HepG2 (cell line): ENCODE measurements at regions of chr6 and their contacts with region 1.

Region 1: DNA sequence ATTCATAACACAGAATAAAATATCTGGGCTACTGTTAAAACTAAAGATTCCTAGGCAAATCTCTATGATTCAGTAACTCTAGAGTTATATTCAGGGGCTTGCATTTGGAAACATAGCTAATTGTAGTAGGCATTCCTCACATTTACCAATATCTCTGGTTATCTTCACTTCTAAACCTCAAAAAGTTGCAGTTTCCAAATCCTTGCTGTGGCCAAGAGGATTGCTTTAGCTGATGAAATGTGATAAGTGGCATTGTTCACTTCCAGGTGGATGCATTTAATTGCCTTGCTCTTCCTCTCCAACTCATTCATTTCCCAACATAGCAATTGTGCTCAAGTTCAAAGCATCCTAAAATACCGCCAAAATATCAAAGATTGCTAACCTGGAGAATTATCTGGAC is 246.6 kb downstream of the GRIK2 start:
- DNase-seq: no peak
- ATAC-seq: no peak
- H3K4me3 ChIP-seq: no peak overlapping the region
- H3K27ac ChIP-seq: no peak overlapping the region
- H3K4me1 ChIP-seq: no peaks in the 10 kb centered on the region
- H3K27me3 ChIP-seq: no peaks in the 10 kb centered on the region
- CTCF ChIP-seq: no peak
- EP300 ChIP-seq: no peak
- POLR2A ChIP-seq: no peak
- RAD21 ChIP-seq: no peak

Region 2: GRCh38 chr6:101666256-101666655 is 26.1 kb after region 1 on chr6:
- CTCF ChIA-PET with region 1: no interaction called
- POLR2A ChIA-PET with region 1: no interaction called
- in situ Hi-C with region 1: no loop called
- intact Hi-C with region 1: loop called (anchors 1 kb)
- DNase-seq: peak; percentile 0
- ATAC-seq: no peak
- H3K4me3 ChIP-seq: no peak overlapping the region
- H3K27ac ChIP-seq: no peak overlapping the region
- H3K4me1 ChIP-seq: no peaks in the 10 kb centered on the region
- H3K27me3 ChIP-seq: no peaks in the 10 kb centered on the region
- CTCF ChIP-seq: no peak
- EP300 ChIP-seq: no peak
- POLR2A ChIP-seq: no peak
- RAD21 ChIP-seq: no peak

Region 3: DNA sequence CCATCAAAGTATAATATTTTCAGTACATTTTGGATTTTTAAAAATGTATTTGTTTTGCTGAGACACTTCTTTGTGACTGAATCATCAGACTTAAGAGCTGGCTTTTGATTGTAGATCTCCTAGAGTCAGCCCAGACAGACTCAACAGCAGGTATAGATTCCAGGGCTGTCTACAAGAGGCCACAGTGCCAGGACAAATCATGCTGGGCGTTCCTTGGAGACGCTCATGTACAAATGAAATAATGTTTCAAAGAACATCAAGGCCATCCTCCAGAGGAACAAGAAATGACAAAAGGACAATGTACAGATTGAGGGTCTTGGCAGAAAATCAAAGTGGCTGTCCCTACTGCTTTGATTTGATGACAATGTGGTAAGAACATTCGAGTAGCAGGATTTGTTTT is 122.7 kb after region 1 on chr6:
- CTCF ChIA-PET with region 1: no interaction called
- POLR2A ChIA-PET with region 1: no interaction called
- in situ Hi-C with region 1: no loop called
- intact Hi-C with region 1: no loop called
- DNase-seq: no peak
- ATAC-seq: no peak
- H3K4me3 ChIP-seq: no peak overlapping the region
- H3K27ac ChIP-seq: no peak overlapping the region
- H3K4me1 ChIP-seq: no peaks in the 10 kb centered on the region
- H3K27me3 ChIP-seq: no peaks in the 10 kb centered on the region
- CTCF ChIP-seq: no peak
- EP300 ChIP-seq: no peak
- POLR2A ChIP-seq: no peak
- RAD21 ChIP-seq: no peak

Region 4: GRCh38 chr6:101845621-101846020 is 205.5 kb after region 1 on chr6:
- CTCF ChIA-PET with region 1: no interaction called
- POLR2A ChIA-PET with region 1: no interaction called
- in situ Hi-C with region 1: no loop called
- intact Hi-C with region 1: no loop called
- DNase-seq: no peak
- ATAC-seq: no peak
- H3K4me3 ChIP-seq: no peak overlapping the region
- H3K27ac ChIP-seq: no peak overlapping the region
- H3K4me1 ChIP-seq: no peaks in the 10 kb centered on the region
- H3K27me3 ChIP-seq: no peaks in the 10 kb centered on the region
- CTCF ChIP-seq: no peak
- EP300 ChIP-seq: no peak
- POLR2A ChIP-seq: no peak
- RAD21 ChIP-seq: no peak